K562 (cell line): ENCODE measurements at regions of chr17 and their contacts with region 1.

Region 1: GRCh38 chr17:47840740-47841603 is at the start of gene SCRN2:
- DNase-seq: peak; percentile 90 to 95 (median 92)
- ATAC-seq: peak; percentile 94
- H3K4me3 ChIP-seq: peak within 1 kb of the TSS; percentile 91
- H3K27ac ChIP-seq: peak within 1 kb of the TSS; percentile 75
- H3K4me1 ChIP-seq: peaks cover 33 to 52% of the 10 kb centered on the region in 2 experiments
- H3K27me3 ChIP-seq: no peaks in the 10 kb centered on the region
- CTCF ChIP-seq: peak; percentile 96 to 98 (median 97)
- EP300 ChIP-seq: no peak
- POLR2A ChIP-seq: peak; percentile 75
- RAD21 ChIP-seq: peak; percentile 99
- polyA plus RNA-seq, gene SCRN2: 0.25 to 1.2 TPM

Region 2: GRCh38 chr17:47802341-47803022 is 38.5 kb before region 1 on chr17:
- CTCF ChIA-PET with region 1: no interaction called
- POLR2A ChIA-PET with region 1: no interaction called
- in situ Hi-C with region 1: no loop called
- intact Hi-C with region 1: no loop called
- DNase-seq: peak; percentile 59 to 68 (median 63)
- ATAC-seq: peak; percentile 95
- H3K4me3 ChIP-seq: no peak overlapping the region
- H3K27ac ChIP-seq: no peak overlapping the region
- H3K4me1 ChIP-seq: peaks cover 0 to 6% of the 10 kb centered on the region in 2 experiments; a peak in 1 of 5 replicates
- H3K27me3 ChIP-seq: peaks cover 0 to 29% of the 10 kb centered on the region in 2 experiments; a peak in 3 of 5 replicates
- CTCF ChIP-seq: peak; percentile 71 to 81 (median 81)
- EP300 ChIP-seq: no peak
- POLR2A ChIP-seq: no peak
- RAD21 ChIP-seq: peak; percentile 40 to 64

Region 3: GRCh38 chr17:47860386-47860785 is 19.4 kb after region 1 on chr17:
- CTCF ChIA-PET with region 1: no interaction called
- POLR2A ChIA-PET with region 1: interaction called, 12 read pairs
- in situ Hi-C with region 1: no loop called
- intact Hi-C with region 1: no loop called
- DNase-seq: no peak
- ATAC-seq: no peak
- H3K4me3 ChIP-seq: no peak overlapping the region
- H3K27ac ChIP-seq: no peak overlapping the region
- H3K4me1 ChIP-seq: peaks cover 8 to 16% of the 10 kb centered on the region in 2 experiments; a peak in 4 of 5 replicates
- H3K27me3 ChIP-seq: no peaks in the 10 kb centered on the region
- CTCF ChIP-seq: no peak
- EP300 ChIP-seq: no peak
- POLR2A ChIP-seq: no peak
- RAD21 ChIP-seq: no peak

Region 4: DNA sequence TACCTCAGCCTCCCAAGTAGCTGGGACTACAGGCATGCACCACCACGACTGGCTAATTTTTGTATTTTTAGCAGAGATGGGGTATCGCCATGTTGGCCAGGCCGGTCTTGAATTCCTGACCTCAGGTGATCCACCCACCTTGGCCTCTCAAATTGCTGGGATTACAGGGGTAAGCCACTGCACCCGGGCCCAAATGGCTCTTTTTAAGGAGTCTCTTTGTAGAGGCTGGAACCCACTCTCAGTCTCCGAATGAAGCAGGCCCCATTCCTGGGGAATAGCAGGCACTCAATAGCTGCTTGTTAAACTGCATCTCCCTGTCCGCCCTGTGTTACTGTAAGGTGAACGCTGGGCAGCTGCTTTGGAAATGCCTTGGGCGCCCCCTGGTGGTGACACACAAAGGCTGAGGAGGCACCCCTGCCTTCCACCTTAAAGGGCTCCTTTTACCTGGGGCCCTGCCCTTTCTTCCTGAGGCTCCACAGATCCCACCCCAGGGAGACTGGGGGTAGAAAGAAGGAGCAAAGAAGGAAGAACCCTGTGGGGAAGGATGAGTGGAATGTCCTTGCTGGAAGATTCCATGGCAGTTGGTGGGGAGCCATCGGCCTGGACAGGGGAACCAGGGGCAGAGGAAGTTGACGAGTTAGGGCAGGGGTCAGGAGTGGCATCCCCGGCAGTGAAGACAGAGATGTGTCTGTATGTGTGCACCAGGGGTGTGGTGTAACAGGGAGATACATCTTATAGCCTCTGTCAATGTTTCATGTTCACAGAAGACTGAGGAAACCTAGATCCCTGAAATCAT is 49.0 kb after region 1 on chr17:
- CTCF ChIA-PET with region 1: interaction called, 171 read pairs
- POLR2A ChIA-PET with region 1: interaction called, 18 read pairs
- in situ Hi-C with region 1: loop called (anchors 5 kb)
- intact Hi-C with region 1: loop called (anchors 1 kb)
- DNase-seq: peak; percentile 72 to 90 (median 74)
- ATAC-seq: peak; percentile 98
- H3K4me3 ChIP-seq: no peak overlapping the region
- H3K27ac ChIP-seq: no peak overlapping the region
- H3K4me1 ChIP-seq: peaks cover 12 to 26% of the 10 kb centered on the region in 2 experiments
- H3K27me3 ChIP-seq: no peaks in the 10 kb centered on the region; a peak in 1 of 5 replicates
- CTCF ChIP-seq: peak; percentile 93 to 97 (median 96)
- EP300 ChIP-seq: no peak
- POLR2A ChIP-seq: no peak
- RAD21 ChIP-seq: peak; percentile 100

Region 5: GRCh38 chr17:47949136-47949759 is 108.3 kb after region 1 on chr17:
- CTCF ChIA-PET with region 1: interaction called, 11 read pairs
- POLR2A ChIA-PET with region 1: interaction called, 3 read pairs
- in situ Hi-C with region 1: no loop called
- intact Hi-C with region 1: loop called (anchors 2 kb)
- DNase-seq: peak; percentile 82 to 90 (median 87)
- ATAC-seq: peak; percentile 95
- H3K4me3 ChIP-seq: no peak overlapping the region
- H3K27ac ChIP-seq: peak overlapping the region; percentile 8; the same call in 1 of the 3 replicates
- H3K4me1 ChIP-seq: peaks cover 9% of the 10 kb centered on the region in 2 experiments; a peak in 3 of 5 replicates
- H3K27me3 ChIP-seq: no peaks in the 10 kb centered on the region
- CTCF ChIP-seq: peak; percentile 95 to 97 (median 96)
- EP300 ChIP-seq: no peak; the same call in 1 of the 2 replicates
- POLR2A ChIP-seq: no peak
- RAD21 ChIP-seq: peak; percentile 87 to 90

Region 6: DNA sequence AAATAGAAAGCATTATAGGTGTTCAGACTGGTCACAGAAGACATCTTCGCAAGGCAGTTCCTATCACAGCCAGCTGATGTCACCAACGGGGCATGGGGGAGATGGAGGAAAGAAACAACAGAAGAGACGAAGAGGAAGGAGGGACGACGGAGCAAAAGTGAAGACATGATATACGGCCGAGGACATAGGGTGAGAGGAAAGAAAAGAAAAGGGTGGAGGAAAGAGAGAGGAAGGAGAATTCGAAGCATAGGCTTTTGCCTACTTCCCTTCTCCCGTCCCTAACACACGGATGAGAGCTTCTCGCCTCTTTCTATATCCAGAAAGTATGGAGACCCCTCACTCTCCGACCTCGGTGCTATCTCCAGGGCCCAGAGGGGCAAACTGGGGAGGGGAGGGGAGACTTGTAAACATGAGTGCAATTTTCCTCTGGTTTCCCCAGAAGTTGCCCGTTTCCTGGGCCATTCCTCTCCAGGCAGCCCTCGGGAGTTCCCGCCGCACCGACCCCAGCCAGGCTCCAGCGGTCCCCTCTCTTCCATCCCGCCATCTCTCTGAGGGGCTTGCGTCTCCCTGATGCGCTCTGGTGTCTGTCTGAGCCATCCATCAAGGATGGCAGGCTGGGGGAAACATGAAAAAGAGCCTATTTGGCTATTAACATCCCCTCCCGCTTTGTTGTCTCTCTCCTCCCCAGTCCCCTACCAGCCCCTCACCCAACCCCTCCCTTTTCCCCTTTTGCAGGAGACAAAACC is 170.6 kb after region 1 on chr17:
- CTCF ChIA-PET with region 1: interaction called, 3 read pairs
- POLR2A ChIA-PET with region 1: no interaction called
- in situ Hi-C with region 1: loop called (anchors 5 kb)
- intact Hi-C with region 1: loop called (anchors 1 kb)
- DNase-seq: peak; percentile 57 to 81 (median 68)
- ATAC-seq: peak; percentile 88
- H3K4me3 ChIP-seq: peak overlapping the region; percentile 12; the same call in 1 of the 2 replicates
- H3K27ac ChIP-seq: 0 out of 3 replicates have a peak overlapping the region, but pooled peaks have one; percentile 21
- H3K4me1 ChIP-seq: peaks cover 22 to 23% of the 10 kb centered on the region in 2 experiments
- H3K27me3 ChIP-seq: no peaks in the 10 kb centered on the region
- CTCF ChIP-seq: peak; percentile 71 to 77 (median 72)
- EP300 ChIP-seq: no peak
- POLR2A ChIP-seq: no peak
- RAD21 ChIP-seq: peak; percentile 34 to 67

Region 7: DNA sequence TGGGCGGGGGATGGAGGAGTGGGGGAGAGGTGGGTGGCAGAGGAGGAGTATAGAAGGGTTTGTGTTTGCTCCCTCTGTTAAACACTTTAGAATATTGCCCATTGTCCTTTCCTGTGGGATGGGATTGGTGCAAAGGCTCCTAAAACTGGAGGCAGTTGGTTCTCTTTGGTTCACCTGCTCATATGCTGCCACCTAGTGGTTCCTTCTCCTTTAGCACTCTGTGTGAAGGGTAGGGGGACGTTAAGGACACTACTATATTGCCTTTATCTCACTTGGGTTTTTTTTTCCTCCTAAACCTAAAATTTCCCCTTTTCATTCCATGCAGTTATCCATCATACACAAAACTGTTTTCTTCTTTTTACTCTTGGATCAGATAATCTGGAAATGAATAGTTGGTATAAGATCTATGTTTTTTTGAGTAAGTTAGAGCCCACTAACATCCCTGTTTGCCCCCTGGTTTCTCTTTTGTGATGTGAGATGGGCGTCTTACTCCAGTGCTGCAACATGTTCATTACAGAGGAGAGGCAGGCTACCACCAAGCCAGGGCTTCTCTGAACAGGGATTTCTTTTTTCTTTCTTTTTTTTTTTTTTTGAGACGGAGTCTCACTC is 290.3 kb after region 1 on chr17:
- CTCF ChIA-PET with region 1: no interaction called
- POLR2A ChIA-PET with region 1: no interaction called
- in situ Hi-C with region 1: no loop called
- intact Hi-C with region 1: loop called (anchors 10 kb)
- DNase-seq: peak; percentile 70 to 81 (median 74)
- ATAC-seq: peak; percentile 96
- H3K4me3 ChIP-seq: no peak overlapping the region
- H3K27ac ChIP-seq: no peak overlapping the region
- H3K4me1 ChIP-seq: no peaks in the 10 kb centered on the region
- H3K27me3 ChIP-seq: no peaks in the 10 kb centered on the region; a peak in 1 of 5 replicates
- CTCF ChIP-seq: peak; percentile 80 to 92 (median 83)
- EP300 ChIP-seq: no peak
- POLR2A ChIP-seq: no peak
- RAD21 ChIP-seq: peak; percentile 69 to 90